Colonic mucosa (tissue), 4 donors: ENCODE measurements at regions of chr22 and their contacts with region 1.

Region 1: GRCh38 chr22:43385770-43386641 is 25.8 kb upstream of the MPPED1 start:
- DNase-seq: peak; percentile 72
- H3K4me3 ChIP-seq: no peak overlapping the region
- H3K27ac ChIP-seq: no peak overlapping the region
- H3K4me1 ChIP-seq: no peaks in the 10 kb centered on the region
- H3K27me3 ChIP-seq: peaks cover 6% of the 10 kb centered on the region
- CTCF ChIP-seq: peak; percentile 85

Region 2: DNA sequence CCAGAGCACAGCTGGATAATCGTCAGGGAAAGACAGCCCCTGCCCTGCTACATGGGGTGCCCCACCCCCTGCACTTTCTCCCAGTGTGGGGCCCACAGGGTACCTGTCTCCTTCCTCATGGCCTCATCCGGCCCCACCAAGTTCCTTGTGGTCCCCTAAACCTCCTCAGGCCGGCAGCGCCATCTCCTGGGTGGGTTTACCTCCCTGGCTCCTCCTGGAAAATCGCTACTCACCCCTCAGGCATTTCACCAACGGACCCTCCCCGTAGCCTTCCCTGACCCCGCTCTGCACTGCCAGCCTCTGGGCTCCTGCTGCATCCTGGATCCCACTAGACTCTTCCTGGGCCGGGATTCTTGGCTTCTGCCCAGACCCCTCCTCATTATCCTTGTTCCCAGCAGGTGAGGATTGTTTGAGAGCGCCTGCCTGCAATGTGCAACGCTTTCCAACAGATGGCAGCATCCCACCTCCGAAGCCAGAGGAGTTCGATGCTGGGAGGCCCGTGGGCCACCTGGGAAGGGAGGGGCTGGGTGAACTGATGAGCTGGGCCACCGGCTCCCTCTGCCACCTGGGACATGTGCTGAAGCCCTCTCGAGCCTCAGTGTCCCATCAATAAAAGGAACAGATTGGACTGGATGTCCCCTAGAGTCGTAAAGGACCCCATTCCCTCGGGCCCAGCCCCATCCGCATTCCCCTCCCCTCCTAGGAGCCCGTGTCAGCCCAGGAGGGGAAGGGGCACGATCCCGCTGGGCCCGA is 154.9 kb before region 1 on chr22:
- intact Hi-C with region 1: loop called (anchors 2 kb)
- DNase-seq: peak; percentile 55
- H3K4me3 ChIP-seq: no peak overlapping the region
- H3K27ac ChIP-seq: no peak overlapping the region
- H3K4me1 ChIP-seq: no peaks in the 10 kb centered on the region
- H3K27me3 ChIP-seq: no peaks in the 10 kb centered on the region
- CTCF ChIP-seq: peak; percentile 86

Region 3: GRCh38 chr22:43273902-43274484 is 112.0 kb before region 1 on chr22:
- intact Hi-C with region 1: loop called (anchors 2 kb)
- DNase-seq: no peak
- H3K4me3 ChIP-seq: no peak overlapping the region
- H3K27ac ChIP-seq: no peak overlapping the region
- H3K4me1 ChIP-seq: peaks cover 3% of the 10 kb centered on the region
- H3K27me3 ChIP-seq: no peaks in the 10 kb centered on the region
- CTCF ChIP-seq: peak; percentile 66

Region 4: DNA sequence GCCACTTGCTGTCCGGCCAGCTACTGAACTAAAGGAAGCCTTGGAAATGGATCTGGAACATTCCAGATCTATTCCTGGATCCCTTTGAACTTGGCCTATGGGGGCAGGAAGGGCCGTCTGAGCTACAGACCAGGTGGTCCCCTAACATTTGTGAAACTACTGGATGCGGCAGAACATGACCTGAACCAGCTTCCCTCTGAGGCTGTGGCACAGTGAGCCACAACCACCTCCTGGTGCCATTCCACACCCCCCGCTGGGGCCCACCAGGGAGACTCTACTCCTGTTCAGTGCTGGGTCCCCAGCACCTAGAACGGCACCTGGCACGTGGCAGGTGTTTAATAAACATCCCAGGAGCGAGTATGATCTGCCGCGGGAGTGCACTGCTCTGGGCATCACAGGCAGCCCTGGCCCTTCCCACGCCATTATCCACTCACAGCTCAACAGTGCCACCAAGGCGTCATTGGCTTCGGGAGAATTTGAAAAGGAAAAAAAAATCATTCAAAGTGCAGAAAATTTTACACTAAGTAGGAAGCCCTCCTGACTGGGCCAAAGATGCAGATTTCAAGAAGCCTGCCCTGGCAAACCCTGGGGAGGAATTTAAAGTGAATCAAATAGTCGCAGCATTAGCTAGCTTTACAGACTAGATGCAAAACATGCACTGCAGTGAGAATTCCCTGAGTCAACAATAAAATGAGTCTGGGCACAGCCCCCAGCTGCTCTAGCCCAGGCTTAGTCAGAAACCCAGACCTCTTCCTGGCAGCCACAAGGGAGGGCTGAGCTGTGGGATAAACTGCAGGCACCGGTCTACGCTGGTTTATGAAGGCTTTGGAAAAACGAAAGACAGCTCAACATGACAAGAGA is 440.4 kb after region 1 on chr22:
- intact Hi-C with region 1: loop called (anchors 5 kb)
- DNase-seq: no peak
- H3K4me3 ChIP-seq: no peak overlapping the region
- H3K27ac ChIP-seq: no peak overlapping the region
- H3K4me1 ChIP-seq: no peaks in the 10 kb centered on the region
- H3K27me3 ChIP-seq: no peaks in the 10 kb centered on the region
- CTCF ChIP-seq: no peak